Common myeloid progenitor, CD34-positive (primary cell): ENCODE measurements at regions of chr1 and their contacts with region 1.

Region 1: DNA sequence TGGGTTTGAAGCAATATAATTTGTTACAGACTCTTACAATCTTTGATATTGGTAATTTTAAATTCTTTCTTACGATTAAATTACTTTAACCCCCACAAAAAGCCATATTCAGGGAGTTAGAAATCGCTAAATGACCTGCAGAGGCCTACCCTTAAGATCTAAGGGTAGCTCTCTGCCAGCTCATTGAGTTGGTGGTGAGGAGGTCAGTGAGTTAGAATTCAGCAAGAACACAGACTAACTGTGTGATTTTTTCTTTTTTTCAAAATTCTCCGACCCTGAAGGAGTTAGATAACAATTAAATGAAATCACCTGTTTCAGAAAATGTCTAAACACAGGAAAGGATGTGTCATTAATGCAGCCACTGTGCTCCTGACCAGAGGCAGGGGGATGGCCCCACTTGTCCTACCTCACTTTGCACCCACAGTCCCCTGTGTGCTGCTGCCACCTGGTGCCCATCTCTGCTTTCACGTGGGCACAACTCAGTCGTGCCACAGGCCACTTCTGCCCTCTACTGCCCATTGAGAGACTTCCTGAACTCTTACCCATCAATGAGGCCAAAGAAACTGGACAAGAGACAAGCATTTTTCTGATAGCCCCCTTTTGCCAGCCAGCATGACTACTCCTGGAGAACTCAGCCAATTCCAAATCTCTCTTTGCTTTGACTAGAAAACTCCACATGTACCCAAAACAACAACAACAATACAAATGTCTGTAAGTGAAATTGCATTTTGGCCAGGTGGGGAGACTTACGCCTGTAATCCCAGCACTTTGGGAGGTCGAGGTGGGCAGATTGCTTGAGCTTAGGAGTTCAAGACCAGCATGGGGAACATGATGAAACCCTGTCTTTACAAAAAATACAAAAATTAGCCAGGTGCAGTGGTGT is 8.4 kb downstream of the CFAP45 start:
- DNase-seq: peak; percentile 82 to 86 (median 85)
- H3K4me3 ChIP-seq: no peak overlapping the region
- H3K27ac ChIP-seq: no peak overlapping the region
- H3K4me1 ChIP-seq: peaks cover 10 to 29% (median 19%) of the 10 kb centered on the region in 4 experiments
- H3K27me3 ChIP-seq: no peaks in the 10 kb centered on the region

Region 2: GRCh38 chr1:159780583-159781582 is 110.6 kb before region 1 on chr1 and contains the start of gene DUSP23:
- CTCF ChIA-PET with region 1: interaction called, 16 read pairs
- POLR2A ChIA-PET with region 1: no interaction called
- DNase-seq: peak; percentile 97 to 98 (median 98)
- H3K4me3 ChIP-seq: peak within 1 kb of the TSS; percentile 51 to 83 (median 70)
- H3K27ac ChIP-seq: peak within 1 kb of the TSS in 1 of 2 experiments; percentile 32
- H3K4me1 ChIP-seq: peaks cover 4 to 33% (median 16%) of the 10 kb centered on the region in 4 experiments
- H3K27me3 ChIP-seq: no peaks in the 10 kb centered on the region

Region 3: DNA sequence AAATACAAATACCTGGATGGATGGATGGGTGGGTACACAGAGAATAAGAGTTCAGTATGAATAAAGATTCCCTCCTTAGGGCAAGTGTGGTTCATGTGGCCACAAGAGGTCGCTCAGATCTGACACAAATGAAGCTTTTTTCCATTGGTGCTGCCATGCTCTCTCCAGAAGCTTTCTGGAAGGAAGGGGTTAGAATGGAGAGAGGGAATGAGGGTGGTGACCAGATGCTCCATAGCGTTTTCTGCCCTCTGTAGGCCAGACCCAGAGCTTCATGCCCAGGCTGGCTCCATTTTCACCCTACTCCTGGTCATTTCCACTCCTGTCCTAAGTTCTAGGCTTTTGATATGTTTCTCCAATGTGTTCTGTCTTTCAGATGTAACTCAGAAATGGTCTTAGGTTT is 92.6 kb before region 1 on chr1:
- CTCF ChIA-PET with region 1: interaction called, 411 read pairs
- POLR2A ChIA-PET with region 1: interaction called, 8 read pairs
- DNase-seq: peak; percentile 79 to 86 (median 83)
- H3K4me3 ChIP-seq: no peak overlapping the region
- H3K27ac ChIP-seq: no peak overlapping the region
- H3K4me1 ChIP-seq: peaks cover 0 to 13% (median 8%) of the 10 kb centered on the region in 4 experiments
- H3K27me3 ChIP-seq: peaks cover 0 to 6% (median 0%) of the 10 kb centered on the region in 5 experiments

Region 4: DNA sequence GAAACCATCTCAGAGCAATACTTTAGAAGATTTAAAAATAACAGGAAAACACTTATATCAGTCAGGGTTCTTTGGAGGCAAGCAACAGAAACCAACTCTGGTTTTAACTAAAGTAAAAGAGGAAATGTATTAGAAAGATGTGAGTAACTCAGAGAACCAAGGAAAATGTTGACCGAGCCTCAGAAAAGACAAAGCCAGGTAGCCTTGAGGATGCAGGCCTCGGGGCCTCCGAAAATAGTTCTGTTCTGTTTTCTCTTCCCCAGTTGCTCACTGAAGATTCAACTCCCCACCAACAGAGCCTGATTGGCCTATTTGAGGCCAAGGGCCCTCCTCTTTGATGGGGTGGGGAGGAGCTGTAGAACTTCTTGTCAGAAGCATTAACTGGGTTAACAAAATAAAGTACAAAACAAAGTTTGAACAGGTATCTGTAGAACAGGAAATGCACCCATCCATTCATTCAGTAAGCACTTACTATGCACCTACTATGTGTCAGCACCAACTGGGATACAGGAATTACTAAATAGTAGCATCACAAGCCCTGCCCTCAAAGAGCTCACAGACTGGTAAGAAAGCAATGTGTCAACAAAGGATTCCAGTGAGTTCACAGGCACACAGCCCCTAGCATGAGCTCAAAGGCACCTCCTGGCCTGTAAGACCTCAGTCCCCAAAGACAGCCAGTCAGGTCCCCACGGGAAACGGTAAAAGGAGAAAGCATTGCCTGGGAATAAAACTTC is 52.2 kb before region 1 on chr1:
- CTCF ChIA-PET with region 1: interaction called, 83 read pairs
- POLR2A ChIA-PET with region 1: no interaction called
- DNase-seq: peak in 2 of 3 donors; percentile 46 to 57
- H3K4me3 ChIP-seq: no peak overlapping the region
- H3K27ac ChIP-seq: no peak overlapping the region
- H3K4me1 ChIP-seq: peaks cover 0 to 5% (median 0%) of the 10 kb centered on the region in 4 experiments
- H3K27me3 ChIP-seq: no peaks in the 10 kb centered on the region

Region 5: GRCh38 chr1:159924981-159925712 is 33.6 kb after region 1 on chr1 and contains the start of gene TAGLN2:
- CTCF ChIA-PET with region 1: interaction called, 250 read pairs
- POLR2A ChIA-PET with region 1: interaction called, 54 read pairs
- DNase-seq: peak; percentile 85 to 93 (median 91)
- H3K4me3 ChIP-seq: peak within 1 kb of the TSS; percentile 85 to 100 (median 94)
- H3K27ac ChIP-seq: peak within 1 kb of the TSS; percentile 100
- H3K4me1 ChIP-seq: peaks cover 7 to 53% (median 49%) of the 10 kb centered on the region in 4 experiments
- H3K27me3 ChIP-seq: no peaks in the 10 kb centered on the region

Region 6: DNA sequence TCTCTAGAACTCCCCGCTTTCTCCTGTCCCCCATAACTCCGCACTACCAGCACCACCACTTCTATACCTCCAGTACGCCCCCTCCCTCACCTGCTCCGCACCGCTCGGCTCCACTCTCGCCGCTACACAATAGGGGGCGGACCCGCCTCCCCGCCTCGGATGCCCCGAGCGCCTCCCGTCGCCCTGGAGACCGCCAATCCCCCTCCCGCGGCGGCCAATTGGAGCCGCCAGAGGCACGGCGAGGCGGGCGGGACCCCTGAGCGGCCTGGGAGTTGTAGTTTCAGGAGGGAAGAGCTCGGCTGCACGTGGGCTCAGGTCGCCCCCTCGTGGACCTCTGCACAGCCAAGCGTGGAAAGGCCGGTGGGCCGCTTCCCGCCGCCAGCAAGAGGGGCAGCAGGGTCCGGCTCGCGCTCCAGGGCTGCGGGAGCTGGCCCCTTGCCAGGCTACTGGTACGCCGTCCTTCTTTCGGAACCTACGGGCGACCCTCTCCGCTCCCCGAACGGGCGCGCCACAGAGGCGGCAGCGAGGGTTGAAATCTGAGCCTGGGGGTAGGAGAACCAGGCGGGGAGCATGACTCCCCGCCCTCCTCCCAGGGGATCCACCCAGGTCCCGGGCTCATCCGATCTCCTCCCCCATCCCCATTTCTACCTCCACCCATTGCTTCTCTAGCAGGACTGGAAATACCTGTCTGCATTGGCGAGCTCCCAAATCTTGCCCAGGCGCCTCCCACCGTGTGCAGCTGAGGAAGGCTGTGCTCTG is 54.1 kb after region 1 on chr1 and contains the start of gene IGSF9:
- CTCF ChIA-PET with region 1: interaction called, 33 read pairs
- POLR2A ChIA-PET with region 1: interaction called, 3 read pairs
- DNase-seq: peak; percentile 89 to 93 (median 92)
- H3K4me3 ChIP-seq: peak within 1 kb of the TSS; percentile 8 to 73 (median 48)
- H3K27ac ChIP-seq: no peak within 1 kb of the TSS
- H3K4me1 ChIP-seq: peaks cover 0 to 27% (median 11%) of the 10 kb centered on the region in 4 experiments
- H3K27me3 ChIP-seq: peaks cover 0 to 25% (median 0%) of the 10 kb centered on the region in 5 experiments

Region 7: DNA sequence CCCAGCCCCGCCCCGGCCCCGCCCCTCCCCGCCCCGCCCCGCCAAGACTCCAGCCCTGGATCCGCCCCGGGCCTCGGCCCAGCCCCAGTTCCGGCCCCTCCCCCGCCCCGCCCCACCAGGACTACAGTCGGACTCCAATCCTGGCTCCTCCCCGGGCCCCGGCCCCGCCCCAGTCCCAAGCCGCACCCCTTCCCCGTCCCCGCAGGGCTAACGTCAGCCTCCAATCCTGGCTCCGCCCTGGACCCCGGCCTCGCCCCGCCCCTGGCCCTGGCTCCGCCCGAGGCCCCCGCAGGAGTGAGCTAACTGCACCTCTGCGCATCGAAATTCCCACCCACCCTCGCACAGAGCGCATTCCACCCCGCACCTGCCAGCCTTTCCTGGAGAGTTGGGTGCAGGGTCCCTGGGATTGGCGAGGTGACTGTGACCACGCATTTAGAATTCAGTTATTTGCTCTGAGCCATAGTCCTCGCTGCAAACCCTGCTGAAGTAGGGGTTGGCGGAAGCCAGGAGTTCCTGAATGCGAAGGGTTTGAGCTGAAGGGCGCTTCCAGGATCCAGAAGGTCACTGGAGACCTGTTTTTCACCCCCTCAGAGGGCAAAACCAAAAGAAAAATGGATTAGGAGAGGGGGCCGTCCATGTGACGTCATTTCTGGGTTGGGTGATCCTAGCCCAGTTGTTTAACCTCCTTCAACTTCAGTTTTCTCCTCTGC is 207.5 kb after region 1 on chr1:
- CTCF ChIA-PET with region 1: no interaction called
- POLR2A ChIA-PET with region 1: no interaction called
- DNase-seq: peak; percentile 92 to 96 (median 95)
- H3K4me3 ChIP-seq: peak overlapping the region; percentile 37 to 89 (median 71)
- H3K27ac ChIP-seq: peak overlapping the region; percentile 41 to 87
- H3K4me1 ChIP-seq: peaks cover 0 to 48% (median 35%) of the 10 kb centered on the region in 4 experiments
- H3K27me3 ChIP-seq: no peaks in the 10 kb centered on the region

Region 8: DNA sequence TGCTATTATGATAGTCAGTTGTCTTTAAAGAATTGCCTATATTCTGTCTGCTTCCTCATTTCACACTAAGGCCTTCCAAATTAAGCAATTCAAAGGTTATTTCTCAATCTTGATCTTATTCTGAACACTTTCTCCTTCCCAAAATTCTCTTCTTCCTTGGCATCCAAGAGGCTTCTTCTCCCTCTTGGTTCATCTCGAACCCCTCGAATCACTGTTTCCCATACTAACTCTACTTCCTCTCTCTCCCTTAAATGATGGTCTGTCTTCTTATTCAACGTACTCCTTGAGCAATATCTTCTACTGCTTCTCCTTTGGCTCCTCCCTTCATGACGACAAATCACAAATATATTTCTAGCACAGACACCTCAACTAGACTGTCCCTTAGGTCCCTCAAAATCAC is 447.1 kb after region 1 on chr1:
- CTCF ChIA-PET with region 1: no interaction called
- POLR2A ChIA-PET with region 1: no interaction called
- DNase-seq: no peak
- H3K4me3 ChIP-seq: no peak overlapping the region
- H3K27ac ChIP-seq: no peak overlapping the region
- H3K4me1 ChIP-seq: peaks cover 8 to 17% (median 9%) of the 10 kb centered on the region in 4 experiments
- H3K27me3 ChIP-seq: no peaks in the 10 kb centered on the region